ENCODE measurements at regions of chr9 and their contacts with region 1.

Region 1: DNA sequence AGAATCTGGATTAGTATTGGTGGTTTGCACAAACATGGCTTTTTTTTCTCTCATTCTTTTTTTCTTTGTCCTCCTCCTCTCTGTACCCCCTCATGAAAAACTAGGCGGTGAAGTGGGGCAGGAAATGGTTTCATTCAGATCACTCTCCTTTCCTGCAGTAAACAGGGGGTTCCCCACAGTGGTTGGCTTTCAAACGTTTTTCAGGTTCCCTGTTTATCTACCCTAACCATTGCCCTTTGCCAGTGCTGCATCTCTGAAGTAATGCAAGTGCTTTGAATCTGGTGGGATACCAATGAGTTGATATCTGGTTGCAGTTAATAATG is 29.8 kb downstream of the NR4A3 start:
- DNase-seq: peak; percentile 85
- ATAC-seq: peak; percentile 90
- H3K4me3 Mint-ChIP-seq: peak overlapping the region; percentile 63
- H3K27ac Mint-ChIP-seq: peak overlapping the region; percentile 88
- H3K4me1 Mint-ChIP-seq: peaks cover 55% of the 10 kb centered on the region
- H3K27me3 Mint-ChIP-seq: no peaks in the 10 kb centered on the region

Region 2: DNA sequence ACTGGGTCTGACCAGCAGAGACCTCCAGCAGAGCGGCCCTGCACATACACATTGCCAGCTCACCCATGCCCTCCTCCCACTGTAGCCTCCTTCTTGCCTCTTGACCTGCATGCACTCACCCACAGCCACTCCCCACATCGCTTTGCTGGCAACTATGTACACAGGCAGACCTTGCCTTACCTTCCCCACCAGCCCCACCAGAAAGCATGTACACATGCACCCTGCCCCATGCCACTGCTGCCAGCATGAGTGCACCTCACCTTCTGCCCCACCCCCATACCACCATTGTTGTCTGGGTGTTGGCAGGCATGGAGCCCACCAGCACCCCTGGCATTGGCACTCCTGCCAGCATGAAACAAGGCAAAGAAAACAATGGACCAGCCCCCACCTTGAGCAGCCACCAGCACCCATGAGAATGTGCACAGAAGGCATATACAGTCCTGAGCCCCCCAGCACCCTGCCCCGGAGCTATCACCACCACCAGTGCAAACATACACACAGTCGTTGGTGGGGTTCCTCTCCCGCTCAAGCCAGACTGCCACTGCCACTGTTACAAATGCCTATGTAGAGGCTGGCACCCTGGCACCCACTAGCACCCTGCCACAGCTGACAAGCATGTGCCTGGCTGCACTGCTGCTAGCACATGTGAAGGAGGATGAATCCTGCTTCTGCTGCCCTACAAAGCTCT is 201.1 kb before region 1 on chr9:
- CTCF ChIA-PET with region 1: no interaction called
- POLR2A ChIA-PET with region 1: no interaction called
- DNase-seq: no peak
- ATAC-seq: no peak
- H3K4me3 Mint-ChIP-seq: no peak overlapping the region
- H3K27ac Mint-ChIP-seq: no peak overlapping the region
- H3K4me1 Mint-ChIP-seq: no peaks in the 10 kb centered on the region
- H3K27me3 Mint-ChIP-seq: peaks cover 21% of the 10 kb centered on the region

Region 3: DNA sequence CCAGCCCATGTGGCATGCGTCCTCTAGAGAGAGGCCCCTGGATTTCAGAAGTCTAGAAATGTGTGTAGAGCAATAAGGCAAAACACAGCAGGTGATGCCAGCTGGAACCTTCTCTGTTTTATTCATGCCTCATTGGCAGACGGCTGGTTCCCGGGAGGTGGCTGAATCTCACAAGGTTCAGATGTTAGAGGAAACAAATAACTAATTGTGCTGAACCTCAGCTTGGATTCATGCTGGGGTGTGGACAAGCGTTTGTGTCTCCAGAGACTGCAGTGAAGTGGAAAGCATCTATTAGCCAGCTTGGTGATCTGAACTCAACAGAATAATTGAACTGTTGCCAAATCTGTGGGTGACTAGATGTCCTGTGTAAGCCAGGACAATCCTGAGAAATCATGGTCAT is 160.9 kb before region 1 on chr9:
- CTCF ChIA-PET with region 1: no interaction called
- POLR2A ChIA-PET with region 1: no interaction called
- DNase-seq: no peak
- ATAC-seq: no peak
- H3K4me3 Mint-ChIP-seq: no peak overlapping the region
- H3K27ac Mint-ChIP-seq: no peak overlapping the region
- H3K4me1 Mint-ChIP-seq: no peaks in the 10 kb centered on the region
- H3K27me3 Mint-ChIP-seq: peaks cover 10% of the 10 kb centered on the region

Region 4: GRCh38 chr9:99732715-99733114 is 118.7 kb before region 1 on chr9:
- CTCF ChIA-PET with region 1: no interaction called
- POLR2A ChIA-PET with region 1: no interaction called
- DNase-seq: no peak
- ATAC-seq: no peak
- H3K4me3 Mint-ChIP-seq: no peak overlapping the region
- H3K27ac Mint-ChIP-seq: no peak overlapping the region
- H3K4me1 Mint-ChIP-seq: peaks cover 6% of the 10 kb centered on the region
- H3K27me3 Mint-ChIP-seq: peaks cover 13% of the 10 kb centered on the region

Region 5: GRCh38 chr9:99828417-99829176 is 22.9 kb before region 1 on chr9:
- CTCF ChIA-PET with region 1: interaction called, 15 read pairs
- POLR2A ChIA-PET with region 1: interaction called, 4 read pairs
- DNase-seq: no peak
- ATAC-seq: no peak
- H3K4me3 Mint-ChIP-seq: no peak overlapping the region
- H3K27ac Mint-ChIP-seq: no peak overlapping the region
- H3K4me1 Mint-ChIP-seq: peaks cover 53% of the 10 kb centered on the region
- H3K27me3 Mint-ChIP-seq: peaks cover 16% of the 10 kb centered on the region

Region 6: DNA sequence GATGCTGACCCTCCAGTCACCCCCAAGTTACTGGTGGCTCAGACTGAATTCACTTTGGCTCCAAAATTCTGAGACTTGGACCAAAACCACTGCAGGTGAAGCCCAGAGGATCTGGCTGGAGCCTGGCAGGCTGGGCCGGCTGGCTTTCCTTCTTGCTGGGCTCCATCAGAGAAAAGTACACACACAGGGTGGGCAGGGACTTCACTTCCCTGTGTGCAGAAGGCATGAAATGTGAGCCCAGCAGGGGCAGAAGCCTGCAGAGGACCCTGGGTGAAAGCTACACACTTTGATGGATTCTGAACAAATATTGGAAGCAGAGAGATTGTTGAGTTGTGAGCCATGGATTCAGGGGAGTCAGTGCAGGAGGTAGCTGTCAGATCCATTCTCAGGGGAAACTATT is 11.4 kb before region 1 on chr9:
- CTCF ChIA-PET with region 1: interaction called, 11 read pairs
- POLR2A ChIA-PET with region 1: no interaction called
- DNase-seq: no peak
- ATAC-seq: no peak
- H3K4me3 Mint-ChIP-seq: no peak overlapping the region
- H3K27ac Mint-ChIP-seq: no peak overlapping the region
- H3K4me1 Mint-ChIP-seq: peaks cover 6% of the 10 kb centered on the region
- H3K27me3 Mint-ChIP-seq: no peaks in the 10 kb centered on the region

Region 7: DNA sequence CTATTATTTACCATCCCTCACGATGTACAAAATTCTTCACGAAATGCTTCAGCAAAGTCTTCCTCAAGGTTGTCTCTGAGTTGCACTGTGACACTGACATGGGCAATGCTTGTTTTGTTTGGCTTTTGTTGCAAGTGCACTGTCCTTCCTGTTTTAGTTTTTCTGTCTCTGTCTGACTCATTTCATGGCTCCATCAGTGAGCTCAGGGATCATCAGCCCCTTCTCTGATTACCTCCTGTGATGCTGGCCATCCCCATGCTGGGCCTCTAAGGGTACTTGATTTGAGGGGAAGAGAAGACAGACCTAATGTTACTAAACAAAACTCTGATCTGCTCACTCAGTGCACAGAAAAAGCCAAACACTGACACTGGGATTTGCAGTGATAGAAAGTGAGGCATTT is 17.4 kb after region 1 on chr9:
- CTCF ChIA-PET with region 1: interaction called, 35 read pairs
- POLR2A ChIA-PET with region 1: interaction called, 7 read pairs
- DNase-seq: no peak
- ATAC-seq: peak; percentile 44
- H3K4me3 Mint-ChIP-seq: no peak overlapping the region
- H3K27ac Mint-ChIP-seq: peak overlapping the region; percentile 48
- H3K4me1 Mint-ChIP-seq: peaks cover 27% of the 10 kb centered on the region
- H3K27me3 Mint-ChIP-seq: no peaks in the 10 kb centered on the region